ENCODE measurements at regions of chr1 and their contacts with region 1.

Region 1: DNA sequence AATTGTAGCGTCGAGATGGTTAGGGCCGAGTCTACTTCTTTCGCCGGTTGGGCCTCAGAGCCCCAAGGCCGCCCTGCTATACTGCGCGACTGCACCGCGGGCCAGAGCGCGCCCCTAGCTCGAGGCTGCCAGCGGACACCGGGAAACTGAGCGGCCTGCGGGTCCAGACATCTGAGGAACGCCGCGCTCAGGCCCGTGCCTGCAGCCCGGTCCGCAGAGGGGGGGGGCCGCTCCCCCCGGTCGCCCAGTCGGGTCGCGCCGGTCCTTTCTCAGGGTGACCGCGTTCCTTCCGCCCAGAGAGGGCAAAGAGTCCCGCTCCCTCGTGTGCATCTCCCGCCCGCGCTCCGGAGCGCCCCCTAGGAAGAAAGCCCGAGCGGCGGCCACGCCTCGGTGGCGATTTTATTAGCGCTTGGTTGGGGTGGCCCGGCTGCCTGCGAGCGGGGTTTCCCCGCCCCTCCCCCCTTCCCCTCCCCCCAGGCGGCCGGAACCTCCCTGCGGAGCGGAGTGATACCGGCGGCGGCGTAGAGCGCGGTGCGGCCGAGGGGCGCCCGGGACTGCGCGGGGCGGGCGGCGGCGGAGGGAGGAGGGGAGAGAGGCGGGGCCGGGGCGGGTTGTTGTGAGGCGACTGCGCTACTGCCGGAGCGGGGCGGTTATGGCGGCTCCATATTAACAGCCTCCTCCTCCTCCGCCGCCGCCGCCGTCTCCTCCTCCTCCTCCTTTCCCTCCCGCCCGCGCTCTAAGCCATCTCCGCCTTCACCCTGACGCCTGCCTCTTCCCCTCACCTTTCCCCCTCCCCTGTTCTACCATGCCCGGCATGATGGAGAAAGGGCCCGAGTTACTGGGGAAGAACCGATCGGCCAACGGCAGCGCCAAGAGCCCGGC is at the start of gene RCOR3:
- DNase-seq: peak; percentile 93 to 98 (median 94)
- ATAC-seq: peak; percentile 83
- H3K4me3 ChIP-seq: peak within 1 kb of the TSS; percentile 93
- H3K27ac ChIP-seq: peak within 1 kb of the TSS; percentile 97
- H3K4me1 ChIP-seq: peaks cover 7 to 19% of the 10 kb centered on the region in 2 experiments; a peak in 3 of 5 replicates
- H3K27me3 ChIP-seq: no peaks in the 10 kb centered on the region
- CTCF ChIP-seq: peak; percentile 70 to 84 (median 84)
- EP300 ChIP-seq: peak; percentile 53
- POLR2A ChIP-seq: peak; percentile 88
- RAD21 ChIP-seq: peak; percentile 42 to 54; a peak in 3 of 4 replicates
- polyA plus RNA-seq, gene RCOR3: 9.7 to 10.5 TPM

Region 2: DNA sequence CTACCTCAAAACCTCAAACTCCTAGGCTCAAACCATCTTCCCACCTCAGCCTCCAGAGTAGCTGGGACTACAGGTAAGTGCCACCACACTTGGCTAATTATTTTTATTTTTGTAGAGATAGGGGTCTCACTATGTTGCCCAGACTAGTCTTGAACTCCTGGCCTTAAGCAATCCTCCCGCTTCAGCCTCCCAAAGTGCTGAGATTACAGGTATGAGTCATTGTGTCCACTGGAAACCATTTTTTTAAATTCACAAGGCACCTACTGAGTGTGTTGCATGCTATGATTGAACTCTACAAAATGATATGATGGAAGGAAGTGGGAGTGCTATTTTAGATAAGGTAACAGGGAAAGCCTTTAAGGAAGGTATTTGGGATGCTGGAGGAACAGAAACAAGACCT is 41.6 kb before region 1 on chr1:
- CTCF ChIA-PET with region 1: no interaction called
- POLR2A ChIA-PET with region 1: interaction called, 4 read pairs
- in situ Hi-C with region 1: no loop called
- intact Hi-C with region 1: loop called (anchors 2 kb)
- DNase-seq: no peak
- ATAC-seq: no peak
- H3K4me3 ChIP-seq: no peak overlapping the region
- H3K27ac ChIP-seq: no peak overlapping the region
- H3K4me1 ChIP-seq: peaks cover 2 to 8% of the 10 kb centered on the region in 2 experiments; a peak in 3 of 5 replicates
- H3K27me3 ChIP-seq: no peaks in the 10 kb centered on the region
- CTCF ChIP-seq: no peak
- EP300 ChIP-seq: no peak
- POLR2A ChIP-seq: no peak
- RAD21 ChIP-seq: no peak

Region 3: DNA sequence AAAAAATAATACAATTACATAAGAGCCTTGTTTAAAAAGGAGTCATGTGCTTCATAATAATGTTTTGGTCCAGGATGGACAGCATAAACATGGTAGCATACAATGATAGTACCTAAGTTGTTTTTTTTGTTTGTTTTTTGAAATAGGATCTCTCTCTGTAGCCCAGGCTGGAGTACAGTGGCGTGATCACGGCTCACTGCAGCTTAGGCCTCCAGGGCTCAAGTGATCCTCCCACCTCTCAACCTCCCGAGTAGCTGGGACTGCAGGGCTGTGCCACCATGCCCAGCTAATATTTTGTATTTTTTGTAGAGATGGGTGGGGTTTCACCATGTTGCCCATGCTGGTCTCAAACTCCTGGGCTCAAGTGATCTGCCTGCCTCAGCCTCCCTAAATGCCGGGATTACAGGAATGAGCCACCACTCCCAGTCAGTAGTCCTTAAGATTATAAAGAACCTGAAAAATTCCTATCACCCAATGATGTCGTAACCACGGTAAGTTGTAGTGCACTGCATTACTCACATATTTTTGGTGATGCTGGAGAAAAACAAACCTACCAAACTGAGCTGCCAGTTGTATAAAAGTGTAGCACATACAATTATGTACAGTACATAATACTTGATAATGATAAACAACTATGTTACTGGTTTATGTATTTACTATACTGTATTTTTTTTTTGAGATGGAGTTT is 22.2 kb before region 1 on chr1:
- CTCF ChIA-PET with region 1: no interaction called
- POLR2A ChIA-PET with region 1: interaction called, 12 read pairs
- in situ Hi-C with region 1: no loop called
- intact Hi-C with region 1: no loop called
- DNase-seq: no peak
- ATAC-seq: 0 out of 3 replicates have a peak, but pooled peaks have one; percentile 22
- H3K4me3 ChIP-seq: no peak overlapping the region
- H3K27ac ChIP-seq: no peak overlapping the region
- H3K4me1 ChIP-seq: no peaks in the 10 kb centered on the region
- H3K27me3 ChIP-seq: no peaks in the 10 kb centered on the region
- CTCF ChIP-seq: no peak
- EP300 ChIP-seq: no peak
- POLR2A ChIP-seq: no peak
- RAD21 ChIP-seq: no peak

Region 4: DNA sequence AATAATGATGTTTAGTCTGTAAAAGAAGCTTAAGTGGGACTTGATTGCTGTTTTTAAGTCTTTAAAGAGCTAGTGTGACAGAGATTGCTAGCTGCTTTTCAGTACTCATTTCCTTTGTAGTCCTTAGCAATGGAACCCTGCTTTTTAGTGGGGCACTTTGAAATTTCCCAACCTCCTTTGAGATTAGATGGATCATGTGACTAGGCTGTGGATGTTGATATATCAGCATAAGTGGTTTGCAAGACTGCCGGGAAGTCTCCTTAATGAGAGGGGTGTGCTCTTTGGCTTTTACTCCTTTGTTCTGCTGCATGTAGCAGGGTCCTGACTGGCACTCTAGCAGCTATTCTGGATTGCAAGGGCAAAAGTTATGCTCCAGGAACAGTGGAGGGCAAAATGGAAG is 11.1 kb before region 1 on chr1:
- CTCF ChIA-PET with region 1: no interaction called
- POLR2A ChIA-PET with region 1: interaction called, 18 read pairs
- in situ Hi-C with region 1: no loop called
- intact Hi-C with region 1: no loop called
- DNase-seq: peak in 2 of 4 experiments; percentile 26 to 48
- ATAC-seq: peak; percentile 79
- H3K4me3 ChIP-seq: no peak overlapping the region
- H3K27ac ChIP-seq: 0 out of 3 replicates have a peak overlapping the region, but pooled peaks have one; percentile 9
- H3K4me1 ChIP-seq: peaks cover 0 to 8% of the 10 kb centered on the region in 2 experiments; a peak in 3 of 5 replicates
- H3K27me3 ChIP-seq: no peaks in the 10 kb centered on the region
- CTCF ChIP-seq: no peak
- EP300 ChIP-seq: no peak
- POLR2A ChIP-seq: no peak
- RAD21 ChIP-seq: no peak

Region 5: GRCh38 chr1:211382714-211383480 is 123.9 kb after region 1 on chr1:
- CTCF ChIA-PET with region 1: no interaction called
- POLR2A ChIA-PET with region 1: interaction called, 4 read pairs
- in situ Hi-C with region 1: no loop called
- intact Hi-C with region 1: loop called (anchors 2 kb)
- DNase-seq: peak; percentile 94 to 99 (median 96)
- ATAC-seq: peak; percentile 98
- H3K4me3 ChIP-seq: peak overlapping the region; percentile 60
- H3K27ac ChIP-seq: peak overlapping the region; percentile 93
- H3K4me1 ChIP-seq: peaks cover 9 to 11% of the 10 kb centered on the region in 2 experiments; a peak in 4 of 5 replicates
- H3K27me3 ChIP-seq: no peaks in the 10 kb centered on the region
- CTCF ChIP-seq: no peak
- EP300 ChIP-seq: peak; percentile 42; the same call in 1 of the 2 replicates
- POLR2A ChIP-seq: peak; percentile 99
- RAD21 ChIP-seq: no peak

Region 6: DNA sequence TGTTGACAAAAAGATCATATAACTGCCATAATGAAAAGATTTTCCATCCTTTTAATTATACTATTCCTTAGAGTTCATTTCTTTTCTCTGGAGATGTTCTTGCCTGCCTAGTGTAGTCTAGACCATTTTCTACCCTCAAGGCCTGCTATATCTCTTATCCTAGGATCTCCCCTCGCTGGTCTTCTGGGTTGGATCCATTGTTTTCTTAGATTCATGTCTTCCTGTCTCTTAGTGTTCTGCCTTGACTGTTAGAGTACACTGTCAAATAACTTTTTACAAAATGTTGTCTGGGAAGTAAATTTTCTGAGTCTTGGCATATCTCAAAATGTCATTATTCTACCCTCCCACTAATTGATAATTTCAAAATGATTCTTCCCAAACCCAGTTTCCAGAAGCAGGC is 134.2 kb after region 1 on chr1:
- CTCF ChIA-PET with region 1: no interaction called
- POLR2A ChIA-PET with region 1: no interaction called
- in situ Hi-C with region 1: no loop called
- intact Hi-C with region 1: no loop called
- DNase-seq: no peak
- ATAC-seq: no peak
- H3K4me3 ChIP-seq: no peak overlapping the region
- H3K27ac ChIP-seq: no peak overlapping the region
- H3K4me1 ChIP-seq: no peaks in the 10 kb centered on the region
- H3K27me3 ChIP-seq: no peaks in the 10 kb centered on the region
- CTCF ChIP-seq: no peak
- EP300 ChIP-seq: no peak
- POLR2A ChIP-seq: no peak
- RAD21 ChIP-seq: no peak

Region 7: DNA sequence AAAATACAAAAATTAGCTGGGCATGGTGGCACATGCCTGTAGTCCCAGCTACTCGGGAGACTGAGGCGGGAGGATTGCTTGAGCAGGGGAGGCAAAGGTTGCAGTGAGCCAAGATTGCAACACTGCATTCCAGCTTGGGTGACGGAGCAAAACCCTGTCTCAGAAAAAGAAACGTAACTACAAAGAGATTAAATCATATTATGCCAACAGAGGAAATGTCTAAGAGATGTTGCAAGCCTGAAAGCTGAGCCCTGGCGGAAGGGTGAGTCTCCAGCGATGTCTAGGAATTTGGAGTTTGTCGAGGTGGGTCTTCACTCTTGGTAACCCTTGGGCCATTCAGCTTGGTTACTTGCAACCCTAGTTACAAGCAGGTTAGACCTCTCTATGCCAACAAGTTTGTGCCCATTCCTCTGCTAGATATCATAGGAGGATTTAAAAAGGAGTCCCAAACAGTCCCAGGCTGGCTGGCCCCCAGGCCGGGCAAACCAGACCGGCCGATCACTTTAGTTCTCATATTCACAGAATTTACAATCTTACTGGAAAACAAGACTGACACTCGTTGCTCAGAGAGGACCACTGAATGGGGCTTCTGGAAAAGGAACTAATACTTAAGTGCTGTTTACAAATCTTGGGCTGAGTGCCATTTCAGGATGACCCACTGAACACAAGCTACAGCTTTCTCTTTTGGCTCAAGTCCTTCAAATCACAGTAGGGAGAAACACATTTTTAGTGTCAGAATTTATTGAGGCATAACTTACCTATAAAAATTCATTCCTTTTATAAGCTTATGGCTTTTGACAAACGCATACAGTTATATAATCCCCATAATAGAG is 292.8 kb after region 1 on chr1:
- CTCF ChIA-PET with region 1: no interaction called
- POLR2A ChIA-PET with region 1: no interaction called
- in situ Hi-C with region 1: no loop called
- intact Hi-C with region 1: no loop called
- DNase-seq: no peak
- ATAC-seq: no peak
- H3K4me3 ChIP-seq: no peak overlapping the region
- H3K27ac ChIP-seq: no peak overlapping the region
- H3K4me1 ChIP-seq: peaks cover 28 to 32% of the 10 kb centered on the region in 2 experiments
- H3K27me3 ChIP-seq: no peaks in the 10 kb centered on the region
- CTCF ChIP-seq: no peak
- EP300 ChIP-seq: no peak
- POLR2A ChIP-seq: no peak
- RAD21 ChIP-seq: no peak

Measured in K562 (cell line).